ENCODE measurements at regions of chr2 and their contacts with region 1.

Region 1: GRCh38 chr2:120174963-120175581 is 48.1 kb downstream of the TMEM185B start:
- DNase-seq: no peak
- H3K4me3 Mint-ChIP-seq: no peak overlapping the region
- H3K27ac Mint-ChIP-seq: no peak overlapping the region
- H3K4me1 Mint-ChIP-seq: peaks cover 42% of the 10 kb centered on the region
- H3K27me3 Mint-ChIP-seq: peaks cover 2% of the 10 kb centered on the region

Region 2: GRCh38 chr2:119641562-119642258 is 533.4 kb before region 1 on chr2:
- intact Hi-C with region 1: loop called (anchors 1 kb)
- DNase-seq: peak; percentile 56
- H3K4me3 Mint-ChIP-seq: no peak overlapping the region
- H3K27ac Mint-ChIP-seq: no peak overlapping the region
- H3K4me1 Mint-ChIP-seq: peaks cover 2% of the 10 kb centered on the region
- H3K27me3 Mint-ChIP-seq: peaks cover 15% of the 10 kb centered on the region

Region 3: GRCh38 chr2:119702918-119703401 is 472.1 kb before region 1 on chr2:
- intact Hi-C with region 1: loop called (anchors 1 kb)
- DNase-seq: peak; percentile 52
- H3K4me3 Mint-ChIP-seq: no peak overlapping the region
- H3K27ac Mint-ChIP-seq: no peak overlapping the region
- H3K4me1 Mint-ChIP-seq: peaks cover 4% of the 10 kb centered on the region
- H3K27me3 Mint-ChIP-seq: peaks cover 4% of the 10 kb centered on the region

Region 4: GRCh38 chr2:119759451-119760236 is 415.4 kb before region 1 on chr2 and contains the start of gene PTPN4:
- intact Hi-C with region 1: loop called (anchors 2 kb)
- DNase-seq: peak; percentile 96
- H3K4me3 Mint-ChIP-seq: peak within 1 kb of the TSS; percentile 89
- H3K27ac Mint-ChIP-seq: peak within 1 kb of the TSS; percentile 78
- H3K4me1 Mint-ChIP-seq: peaks cover 42% of the 10 kb centered on the region
- H3K27me3 Mint-ChIP-seq: no peaks in the 10 kb centered on the region
- total RNA-seq, gene PTPN4: 22.1 and 22.5 TPM in 2 replicates

Region 5: GRCh38 chr2:119862127-119862889 is 312.8 kb before region 1 on chr2:
- intact Hi-C with region 1: loop called (anchors 5 kb)
- DNase-seq: no peak
- H3K4me3 Mint-ChIP-seq: peak overlapping the region; percentile 37
- H3K27ac Mint-ChIP-seq: peak overlapping the region; percentile 63
- H3K4me1 Mint-ChIP-seq: peaks cover 60% of the 10 kb centered on the region
- H3K27me3 Mint-ChIP-seq: no peaks in the 10 kb centered on the region

Region 6: DNA sequence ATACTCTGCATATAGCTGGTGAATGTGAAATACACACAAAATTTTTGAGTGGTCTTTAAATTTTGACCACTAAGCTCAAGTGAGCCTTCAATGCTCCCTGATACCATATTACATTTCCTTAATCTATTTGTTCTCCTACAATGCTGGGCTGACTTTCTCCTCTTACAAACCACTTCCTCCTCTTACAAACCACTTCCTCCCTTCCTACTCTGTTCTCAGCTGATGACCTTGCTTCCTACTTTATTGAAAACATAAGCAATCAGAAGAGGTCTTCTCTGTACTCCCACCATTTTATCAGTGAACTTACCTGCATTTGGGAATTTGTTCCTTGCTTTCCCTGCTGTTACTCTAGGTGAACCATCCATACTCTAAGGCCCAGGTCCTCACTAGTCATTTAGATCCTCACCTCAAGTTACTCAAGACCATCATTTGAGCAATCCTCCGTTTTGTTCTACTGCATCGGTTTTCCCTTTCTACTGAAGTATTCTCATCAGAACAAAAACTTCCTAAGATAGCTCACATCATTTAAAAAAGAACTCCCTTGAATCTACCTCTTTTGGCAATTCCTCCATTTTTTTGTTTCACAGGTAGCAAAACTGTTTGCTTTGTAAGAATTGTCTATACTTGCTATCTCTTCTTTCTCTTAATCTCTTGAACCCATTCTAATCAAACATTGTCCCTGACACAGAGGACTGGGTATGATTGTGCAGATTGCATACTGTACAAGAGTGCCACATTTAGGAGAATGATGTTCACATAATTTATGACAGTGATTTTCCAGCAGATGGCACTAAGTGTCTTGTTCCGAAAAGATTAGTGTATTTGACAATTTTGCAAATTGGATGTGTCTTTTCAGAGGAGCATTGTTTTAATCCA is 65.6 kb before region 1 on chr2:
- intact Hi-C with region 1: loop called (anchors 1 kb)
- DNase-seq: no peak
- H3K4me3 Mint-ChIP-seq: peak overlapping the region; percentile 57
- H3K27ac Mint-ChIP-seq: peak overlapping the region; percentile 38
- H3K4me1 Mint-ChIP-seq: peaks cover 25% of the 10 kb centered on the region
- H3K27me3 Mint-ChIP-seq: peaks cover 29% of the 10 kb centered on the region

Region 7: GRCh38 chr2:120312861-120313694 is 138.0 kb after region 1 on chr2:
- intact Hi-C with region 1: loop called (anchors 2 kb)
- DNase-seq: peak; percentile 69
- H3K4me3 Mint-ChIP-seq: peak overlapping the region; percentile 67
- H3K27ac Mint-ChIP-seq: peak overlapping the region; percentile 58
- H3K4me1 Mint-ChIP-seq: peaks cover 29% of the 10 kb centered on the region
- H3K27me3 Mint-ChIP-seq: no peaks in the 10 kb centered on the region

Region 8: GRCh38 chr2:120453635-120453998 is 278.5 kb after region 1 on chr2:
- intact Hi-C with region 1: no loop called
- DNase-seq: no peak
- H3K4me3 Mint-ChIP-seq: no peak overlapping the region
- H3K27ac Mint-ChIP-seq: no peak overlapping the region
- H3K4me1 Mint-ChIP-seq: no peaks in the 10 kb centered on the region
- H3K27me3 Mint-ChIP-seq: no peaks in the 10 kb centered on the region

Measured in activated T-helper 2 cell treated with anti-CD3 and anti-CD28 coated beads, Interferon-gamma antibody, Interleukin-2, Interleukin-4, amounts not matched to agents 10 μg/mL and 5 μg/mL and 100 μg/mL, durations not matched to agents 14 hours and 24 hours and 36 hours (primary cell).